Heart right ventricle (tissue), 16 donors: ENCODE measurements at regions of chr4 and their contacts with region 1.

Region 1: DNA sequence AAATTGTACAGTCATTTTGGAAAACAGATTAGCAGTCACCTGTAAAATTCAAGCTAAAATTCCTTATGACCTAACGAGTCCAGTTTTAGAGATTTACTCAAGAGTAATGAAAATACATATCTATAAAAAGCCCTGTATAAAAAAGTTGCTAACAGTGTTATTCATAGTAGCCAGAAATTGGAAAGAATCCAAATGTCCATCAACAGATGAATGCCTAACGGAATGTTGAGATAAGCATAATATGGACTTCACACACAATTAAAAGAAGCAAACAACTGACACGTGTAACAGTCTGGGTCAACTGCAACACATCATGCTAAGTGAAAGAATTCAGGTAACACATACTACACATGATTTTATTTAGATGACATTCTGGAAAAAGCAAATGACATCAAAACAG is 584.8 kb upstream of the AGA start:
- DNase-seq: no peak
- ATAC-seq: peak in 6 of 8 donors; percentile 37 to 90 (median 75)
- H3K4me3 ChIP-seq: no peak overlapping the region
- H3K27ac ChIP-seq: peak overlapping the region in 3 of 10 donors; percentile 5 to 63 (median 17)
- H3K4me1 ChIP-seq: peaks cover 0 to 29% (median 3%) of the 10 kb centered on the region in 9 donors
- H3K27me3 ChIP-seq: no peaks in the 10 kb centered on the region
- CTCF ChIP-seq: no peak

Region 2: DNA sequence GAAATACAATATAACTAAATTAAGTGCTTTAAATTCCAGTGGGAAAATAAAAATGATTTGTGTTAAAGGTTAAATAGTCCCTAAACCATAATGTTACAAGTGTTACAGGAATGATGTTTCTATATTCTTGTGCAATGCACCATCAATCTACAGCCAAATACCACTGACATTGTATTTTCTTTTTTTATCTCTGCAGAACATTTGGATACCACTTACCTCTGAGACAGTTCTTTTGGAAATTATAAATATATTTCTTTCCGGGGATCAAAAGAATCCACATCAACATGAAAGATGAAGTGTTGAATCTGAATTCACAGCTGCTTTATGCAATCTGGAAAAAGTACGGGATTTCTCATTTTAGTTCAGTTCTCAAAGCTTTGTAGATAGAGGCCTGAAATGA is 66.4 kb before region 1 on chr4:
- intact Hi-C with region 1: no loop called
- DNase-seq: no peak
- ATAC-seq: no peak
- H3K4me3 ChIP-seq: no peak overlapping the region
- H3K27ac ChIP-seq: no peak overlapping the region
- H3K4me1 ChIP-seq: no peaks in the 10 kb centered on the region
- H3K27me3 ChIP-seq: no peaks in the 10 kb centered on the region
- CTCF ChIP-seq: no peak

Region 3: GRCh38 chr4:178003098-178003657 is 23.8 kb before region 1 on chr4:
- intact Hi-C with region 1: loop called in 1 of 10 experiments (anchors 2 kb)
- DNase-seq: no peak
- ATAC-seq: no peak
- H3K4me3 ChIP-seq: no peak overlapping the region
- H3K27ac ChIP-seq: no peak overlapping the region
- H3K4me1 ChIP-seq: no peaks in the 10 kb centered on the region
- H3K27me3 ChIP-seq: no peaks in the 10 kb centered on the region
- CTCF ChIP-seq: no peak

Region 4: GRCh38 chr4:178306565-178306964 is 279.6 kb after region 1 on chr4:
- intact Hi-C with region 1: loop called in 1 of 10 experiments (anchors 10 kb)
- DNase-seq: no peak
- ATAC-seq: peak in 1 of 8 donors; percentile 11
- H3K4me3 ChIP-seq: no peak overlapping the region
- H3K27ac ChIP-seq: no peak overlapping the region
- H3K4me1 ChIP-seq: no peaks in the 10 kb centered on the region
- H3K27me3 ChIP-seq: no peaks in the 10 kb centered on the region
- CTCF ChIP-seq: no peak